ENCODE measurements at regions of chr18 and their contacts with region 1.

Region 1: GRCh38 chr18:48475635-48476549 is 62.9 kb upstream of the CTIF start:
- DNase-seq: peak; percentile 53
- ATAC-seq: peak; percentile 55
- H3K4me3 Mint-ChIP-seq: no peak overlapping the region
- H3K27ac Mint-ChIP-seq: no peak overlapping the region
- H3K4me1 Mint-ChIP-seq: no peaks in the 10 kb centered on the region
- H3K27me3 Mint-ChIP-seq: peaks cover 50% of the 10 kb centered on the region

Region 2: GRCh38 chr18:48486754-48487153 is 10.9 kb after region 1 on chr18:
- CTCF ChIA-PET with region 1: interaction called, 15 read pairs
- DNase-seq: no peak
- ATAC-seq: no peak
- H3K4me3 Mint-ChIP-seq: no peak overlapping the region
- H3K27ac Mint-ChIP-seq: no peak overlapping the region
- H3K4me1 Mint-ChIP-seq: no peaks in the 10 kb centered on the region
- H3K27me3 Mint-ChIP-seq: peaks cover 27% of the 10 kb centered on the region

Region 3: DNA sequence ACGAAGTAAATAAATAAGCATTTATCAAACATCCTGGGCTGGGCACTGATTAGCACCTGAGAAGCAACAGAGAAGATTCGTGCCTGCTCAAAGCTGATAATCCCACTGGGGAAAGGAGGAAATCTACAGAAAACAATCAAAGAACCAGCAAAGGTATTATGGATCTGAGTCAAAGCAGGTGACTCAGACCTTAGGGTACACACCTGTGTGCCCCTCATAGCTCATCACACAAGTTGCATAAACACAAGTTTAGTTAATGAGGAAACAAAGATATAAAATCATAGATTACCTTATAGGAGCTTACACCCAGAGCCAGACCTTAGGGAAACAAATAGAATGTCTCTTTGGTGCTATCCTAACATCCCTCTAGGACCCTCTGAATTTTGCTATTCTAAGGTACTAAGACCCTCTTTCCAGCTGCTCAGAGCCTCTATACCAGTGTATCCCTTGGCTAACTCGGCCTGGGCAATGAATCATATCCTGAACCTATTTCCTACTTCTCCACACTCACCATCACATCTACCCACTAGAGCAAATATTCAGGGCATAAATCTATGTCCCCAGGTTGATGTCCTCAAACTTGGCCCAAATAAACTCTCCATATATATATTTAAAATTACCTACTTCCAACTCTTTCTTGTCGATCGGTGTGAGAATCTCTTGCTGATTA is 43.7 kb after region 1 on chr18:
- CTCF ChIA-PET with region 1: no interaction called
- DNase-seq: no peak
- ATAC-seq: no peak
- H3K4me3 Mint-ChIP-seq: no peak overlapping the region
- H3K27ac Mint-ChIP-seq: no peak overlapping the region
- H3K4me1 Mint-ChIP-seq: no peaks in the 10 kb centered on the region
- H3K27me3 Mint-ChIP-seq: peaks cover 36% of the 10 kb centered on the region

Region 4: DNA sequence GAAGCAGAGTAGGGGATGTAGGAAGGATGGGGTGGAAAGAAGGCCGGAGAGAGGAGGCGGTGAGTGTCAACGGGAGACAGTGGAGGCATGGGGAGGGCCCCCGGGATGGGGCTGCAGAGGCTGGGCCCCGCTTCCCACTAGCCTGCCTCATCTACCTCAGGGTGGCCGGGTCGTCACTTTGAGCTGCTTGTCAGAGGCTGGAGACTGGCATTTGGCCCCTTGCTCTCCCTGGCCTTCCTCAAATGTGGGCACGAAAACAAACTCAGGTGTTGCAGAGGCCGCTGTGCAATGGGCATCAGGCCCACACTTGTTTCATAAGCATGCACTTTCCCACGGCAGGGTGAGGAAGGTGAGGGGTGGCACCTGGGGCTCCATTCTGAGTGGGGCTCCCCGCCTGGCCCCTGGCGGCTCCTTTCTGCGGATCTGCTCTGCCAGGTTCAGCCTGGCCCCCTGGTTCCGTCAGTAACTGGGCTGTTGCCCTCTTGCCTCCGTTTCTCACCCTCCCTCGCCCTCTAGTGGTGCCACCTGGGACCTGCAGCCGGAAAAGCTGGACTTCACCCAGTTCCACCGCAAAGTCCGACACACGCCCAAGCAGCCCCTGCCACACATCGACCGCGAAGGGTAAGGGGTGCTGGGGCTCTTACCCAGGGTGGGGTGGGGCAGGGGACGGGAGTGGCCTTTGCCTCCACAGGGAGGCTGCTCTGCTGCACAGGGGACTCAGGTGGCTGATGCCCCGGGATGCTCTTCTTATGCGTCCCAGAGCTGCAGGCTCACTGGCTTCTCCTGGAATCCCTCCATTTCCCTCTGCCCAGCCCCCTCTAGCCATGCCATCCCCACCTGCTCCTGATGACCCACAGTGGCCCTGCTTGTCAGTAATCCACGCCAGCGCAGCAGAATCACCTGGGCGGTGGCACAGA is 188.3 kb after region 1 on chr18:
- CTCF ChIA-PET with region 1: interaction called, 29 read pairs
- DNase-seq: peak; percentile 64
- ATAC-seq: peak; percentile 27
- H3K4me3 Mint-ChIP-seq: no peak overlapping the region
- H3K27ac Mint-ChIP-seq: no peak overlapping the region
- H3K4me1 Mint-ChIP-seq: no peaks in the 10 kb centered on the region
- H3K27me3 Mint-ChIP-seq: peaks cover 4% of the 10 kb centered on the region

Measured in activated CD8-positive, alpha-beta memory T cell treated with anti-CD3 and anti-CD28 coated beads, Interleukin-2, amount 10 ng/mL, durations not matched to agents 7 days and 5 days (primary cell).